Activated CD4-positive, alpha-beta memory T cell treated with anti-CD3 and anti-CD28 coated beads for 36 hours (primary cell): ENCODE measurements at regions of chr20 and their contacts with region 1.

Region 1: DNA sequence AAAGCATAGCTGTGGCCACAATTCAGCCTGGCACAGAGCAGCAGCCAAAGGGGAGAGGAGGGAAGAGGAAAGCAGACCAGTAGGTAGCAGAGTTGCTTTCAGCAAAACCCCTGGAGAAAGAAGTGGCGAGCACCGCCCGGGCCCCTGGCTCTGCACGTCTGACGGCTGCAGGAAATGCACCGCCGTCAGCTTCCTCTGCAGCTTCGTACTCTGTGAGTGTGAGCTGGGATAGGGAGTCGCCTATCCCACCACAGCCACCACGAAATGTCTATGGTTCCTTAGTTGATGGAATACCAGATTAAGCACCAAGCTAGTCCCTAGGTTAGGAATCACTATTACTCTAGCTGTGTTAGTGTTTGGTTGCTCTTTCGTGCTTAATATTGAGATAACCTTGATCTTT is 79.9 kb upstream of the NAA20 start:
- DNase-seq: peak; percentile 54
- H3K4me3 Mint-ChIP-seq: peak overlapping the region; percentile 13
- H3K27ac Mint-ChIP-seq: no peak overlapping the region
- H3K4me1 Mint-ChIP-seq: peaks cover 25% of the 10 kb centered on the region
- H3K27me3 Mint-ChIP-seq: peaks cover 14% of the 10 kb centered on the region

Region 2: DNA sequence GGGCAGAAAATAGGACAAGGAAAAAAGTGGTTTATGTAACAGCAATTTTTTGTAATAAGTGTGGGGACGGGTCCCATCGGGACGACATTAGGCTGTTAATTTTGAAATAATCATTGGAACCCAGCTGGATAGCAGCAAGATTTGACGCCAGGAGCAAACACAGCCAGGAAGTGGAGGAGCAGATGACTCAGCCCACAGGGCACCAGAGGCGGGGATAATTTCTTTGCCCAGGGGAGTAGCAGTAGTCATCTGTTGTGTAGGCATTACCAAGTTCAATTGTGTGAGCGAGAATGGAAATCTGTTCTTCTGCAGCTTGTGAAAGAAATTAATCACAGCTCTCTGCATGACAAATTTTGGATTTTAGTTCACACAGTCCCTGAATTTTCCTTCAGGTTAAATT is 201.8 kb before region 1 on chr20:
- CTCF ChIA-PET with region 1: no interaction called
- POLR2A ChIA-PET with region 1: no interaction called
- intact Hi-C with region 1: loop called (anchors 1 kb)
- DNase-seq: peak; percentile 70
- H3K4me3 Mint-ChIP-seq: no peak overlapping the region
- H3K27ac Mint-ChIP-seq: peak overlapping the region; percentile 7
- H3K4me1 Mint-ChIP-seq: peaks cover 19% of the 10 kb centered on the region
- H3K27me3 Mint-ChIP-seq: peaks cover 8% of the 10 kb centered on the region

Region 3: GRCh38 chr20:19802492-19803158 is 134.6 kb before region 1 on chr20:
- CTCF ChIA-PET with region 1: no interaction called
- POLR2A ChIA-PET with region 1: no interaction called
- intact Hi-C with region 1: no loop called
- DNase-seq: no peak
- H3K4me3 Mint-ChIP-seq: no peak overlapping the region
- H3K27ac Mint-ChIP-seq: no peak overlapping the region
- H3K4me1 Mint-ChIP-seq: no peaks in the 10 kb centered on the region
- H3K27me3 Mint-ChIP-seq: no peaks in the 10 kb centered on the region

Region 4: GRCh38 chr20:19828232-19828631 is 109.0 kb before region 1 on chr20:
- CTCF ChIA-PET with region 1: no interaction called
- POLR2A ChIA-PET with region 1: no interaction called
- intact Hi-C with region 1: loop called (anchors 1 kb)
- DNase-seq: peak; percentile 63
- H3K4me3 Mint-ChIP-seq: no peak overlapping the region
- H3K27ac Mint-ChIP-seq: peak overlapping the region; percentile 60
- H3K4me1 Mint-ChIP-seq: peaks cover 24% of the 10 kb centered on the region
- H3K27me3 Mint-ChIP-seq: peaks cover 5% of the 10 kb centered on the region

Region 5: DNA sequence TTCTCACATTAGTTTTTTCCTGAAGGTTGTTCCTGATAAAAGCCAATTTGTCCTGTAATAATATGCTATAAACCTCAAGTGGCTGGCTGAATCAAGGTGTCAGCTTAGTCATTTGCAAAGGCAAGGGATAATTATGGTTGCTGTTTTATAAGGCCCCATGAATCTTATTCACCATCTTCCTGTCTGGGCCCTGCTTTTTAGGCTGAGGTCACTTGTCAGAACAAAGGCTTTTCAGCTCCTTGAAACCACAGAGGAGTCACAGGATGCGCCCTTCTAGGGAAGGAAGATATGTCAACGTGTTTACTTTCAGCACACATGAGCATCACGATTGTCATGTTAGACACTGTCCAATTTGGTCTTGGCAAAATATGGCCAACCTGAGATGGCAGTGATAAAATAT is 15.2 kb after region 1 on chr20:
- CTCF ChIA-PET with region 1: no interaction called
- POLR2A ChIA-PET with region 1: no interaction called
- intact Hi-C with region 1: no loop called
- DNase-seq: peak; percentile 40
- H3K4me3 Mint-ChIP-seq: no peak overlapping the region
- H3K27ac Mint-ChIP-seq: no peak overlapping the region
- H3K4me1 Mint-ChIP-seq: peaks cover 14% of the 10 kb centered on the region
- H3K27me3 Mint-ChIP-seq: peaks cover 2% of the 10 kb centered on the region

Region 6: DNA sequence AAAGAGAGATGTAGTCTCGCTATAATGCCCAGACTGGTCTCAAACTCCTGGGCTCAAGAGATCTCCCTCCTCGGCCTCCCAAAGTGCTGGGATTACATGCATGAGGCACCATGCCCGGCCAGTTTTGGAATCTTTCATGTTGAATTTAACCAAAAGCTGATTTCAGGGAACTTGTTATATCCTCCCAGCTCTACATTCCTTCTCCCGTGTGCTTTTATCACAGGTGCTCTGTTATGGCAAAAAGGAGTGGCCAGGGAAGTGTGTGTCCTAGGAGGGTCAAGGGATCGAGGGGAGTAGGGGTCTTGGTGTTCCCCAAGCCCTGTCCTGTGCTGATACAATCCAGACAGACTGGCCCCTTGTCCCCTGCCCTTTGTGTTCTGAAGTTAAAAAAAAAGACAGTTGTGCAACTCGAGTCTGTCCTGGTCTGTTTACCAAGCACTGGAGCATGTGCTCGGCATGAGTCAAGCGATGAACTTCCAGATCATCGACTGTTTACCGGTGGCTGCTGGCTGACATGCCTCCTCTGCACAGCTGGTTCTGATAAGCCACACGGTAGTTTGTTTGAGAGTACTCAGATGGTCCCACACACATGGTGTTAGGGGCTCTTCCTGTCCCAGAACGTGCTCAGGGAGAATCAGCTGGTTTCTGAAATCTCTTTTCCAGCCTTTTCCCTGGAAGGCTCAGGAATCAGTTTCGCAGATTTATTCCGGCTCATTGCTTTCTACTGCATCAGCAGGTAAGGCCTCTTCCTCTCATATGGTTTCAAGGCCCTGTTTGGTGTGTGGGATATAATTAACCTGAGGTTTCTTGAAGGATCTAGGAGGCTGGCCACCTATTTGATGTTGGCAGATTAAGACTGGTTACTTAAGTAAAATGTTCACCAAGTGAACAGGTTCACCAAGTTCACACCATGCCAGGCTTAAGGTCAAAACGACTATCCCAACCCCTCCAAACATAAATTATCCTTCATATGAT is 27.4 kb after region 1 on chr20:
- CTCF ChIA-PET with region 1: no interaction called
- POLR2A ChIA-PET with region 1: no interaction called
- intact Hi-C with region 1: no loop called
- DNase-seq: no peak
- H3K4me3 Mint-ChIP-seq: no peak overlapping the region
- H3K27ac Mint-ChIP-seq: no peak overlapping the region
- H3K4me1 Mint-ChIP-seq: peaks cover 23% of the 10 kb centered on the region
- H3K27me3 Mint-ChIP-seq: no peaks in the 10 kb centered on the region

Region 7: DNA sequence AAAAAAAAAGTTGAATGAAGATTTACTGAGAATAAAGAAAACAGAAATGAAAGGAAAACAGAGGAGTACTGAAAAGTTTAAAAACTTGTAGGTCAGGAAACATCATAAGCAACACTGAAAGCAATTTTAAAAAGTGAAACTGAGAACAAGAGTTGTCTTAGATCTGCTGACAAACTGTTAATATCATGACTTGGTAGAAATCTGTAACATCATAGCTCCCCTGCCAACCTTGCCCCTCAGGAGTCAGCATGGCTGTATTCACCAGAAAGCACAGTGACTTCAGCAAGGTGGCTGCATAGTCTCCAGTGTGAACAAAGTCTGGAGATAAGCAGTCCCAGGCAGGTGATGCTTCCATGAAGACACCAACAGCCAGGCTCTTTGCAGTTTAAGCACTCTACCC is 85.3 kb after region 1 on chr20:
- CTCF ChIA-PET with region 1: interaction called, 3 read pairs
- POLR2A ChIA-PET with region 1: no interaction called
- intact Hi-C with region 1: loop called (anchors 2 kb)
- DNase-seq: peak; percentile 37
- H3K4me3 Mint-ChIP-seq: no peak overlapping the region
- H3K27ac Mint-ChIP-seq: peak overlapping the region; percentile 71
- H3K4me1 Mint-ChIP-seq: peaks cover 47% of the 10 kb centered on the region
- H3K27me3 Mint-ChIP-seq: no peaks in the 10 kb centered on the region